AG04450 (cell line): ENCODE measurements at regions of chr6 and their contacts with region 1.

Region 1: DNA sequence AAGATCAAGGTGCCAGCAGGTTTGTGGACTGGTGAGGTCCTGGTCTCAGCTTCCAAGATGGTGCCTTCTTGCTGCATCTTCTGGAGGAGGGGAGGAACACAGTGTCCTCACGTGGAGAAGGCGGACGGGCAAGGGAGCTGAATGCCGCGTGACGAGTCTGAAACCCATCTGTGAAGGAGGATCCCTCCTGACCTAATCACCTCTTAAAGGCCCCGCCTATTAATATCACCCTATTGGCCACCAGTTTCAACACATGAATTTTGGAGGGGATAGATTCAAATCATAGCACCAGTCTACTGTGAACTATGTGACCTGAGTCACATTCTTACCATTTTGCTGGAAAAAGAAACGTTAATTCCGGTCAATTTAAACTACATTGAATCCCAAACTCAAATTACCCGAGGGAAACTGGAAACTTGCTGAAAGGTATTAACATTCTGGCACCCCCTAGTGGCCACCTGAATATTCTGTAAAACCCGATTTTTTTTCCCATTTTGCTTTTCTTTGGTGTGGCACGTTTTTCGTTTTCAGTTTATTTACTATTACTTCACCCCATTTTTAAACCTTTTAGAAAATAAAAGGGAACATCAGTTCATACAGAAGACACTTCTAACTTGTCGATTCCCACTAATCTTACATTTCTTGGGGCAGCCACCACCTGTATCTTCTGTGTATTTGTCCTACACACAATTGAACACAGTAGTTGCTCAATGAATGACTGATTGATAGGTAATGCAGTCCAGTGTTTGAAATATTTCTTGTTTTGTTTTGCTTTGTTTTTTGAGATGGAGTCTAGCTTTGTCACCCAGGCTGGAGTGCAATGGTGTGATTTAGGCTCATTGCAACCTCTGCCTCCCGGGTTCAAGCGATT is 17.9 kb upstream of the CCDC170 start:
- DNase-seq: no peak
- H3K4me3 ChIP-seq: no peak overlapping the region
- H3K27ac ChIP-seq: no peak overlapping the region
- H3K27me3 ChIP-seq: no peaks in the 10 kb centered on the region
- CTCF ChIP-seq: peak; percentile 74

Region 2: DNA sequence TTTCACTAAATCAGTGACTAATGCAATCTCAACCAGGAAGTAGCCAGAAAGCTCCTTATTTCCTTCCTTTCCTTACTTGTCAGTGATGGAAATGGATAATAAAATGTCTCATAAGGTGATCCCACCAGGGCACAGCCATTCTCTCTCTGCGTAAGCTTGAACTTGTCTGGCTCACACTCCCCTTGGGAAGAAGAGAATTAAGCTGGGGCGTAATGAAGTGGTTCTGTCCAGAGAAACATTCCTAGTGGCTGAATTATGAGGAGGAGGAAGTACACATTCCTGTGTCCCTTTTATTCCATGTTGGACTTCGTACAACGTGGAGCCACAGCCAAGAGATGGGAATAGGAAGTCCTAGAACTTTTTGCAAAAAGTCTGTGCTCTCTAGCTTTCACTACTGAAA is 516.7 kb before region 1 on chr6:
- CTCF ChIA-PET with region 1: no interaction called
- POLR2A ChIA-PET with region 1: no interaction called
- DNase-seq: no peak
- H3K4me3 ChIP-seq: no peak overlapping the region
- H3K27ac ChIP-seq: peak overlapping the region; percentile 4
- H3K27me3 ChIP-seq: no peaks in the 10 kb centered on the region
- CTCF ChIP-seq: no peak

Region 3: DNA sequence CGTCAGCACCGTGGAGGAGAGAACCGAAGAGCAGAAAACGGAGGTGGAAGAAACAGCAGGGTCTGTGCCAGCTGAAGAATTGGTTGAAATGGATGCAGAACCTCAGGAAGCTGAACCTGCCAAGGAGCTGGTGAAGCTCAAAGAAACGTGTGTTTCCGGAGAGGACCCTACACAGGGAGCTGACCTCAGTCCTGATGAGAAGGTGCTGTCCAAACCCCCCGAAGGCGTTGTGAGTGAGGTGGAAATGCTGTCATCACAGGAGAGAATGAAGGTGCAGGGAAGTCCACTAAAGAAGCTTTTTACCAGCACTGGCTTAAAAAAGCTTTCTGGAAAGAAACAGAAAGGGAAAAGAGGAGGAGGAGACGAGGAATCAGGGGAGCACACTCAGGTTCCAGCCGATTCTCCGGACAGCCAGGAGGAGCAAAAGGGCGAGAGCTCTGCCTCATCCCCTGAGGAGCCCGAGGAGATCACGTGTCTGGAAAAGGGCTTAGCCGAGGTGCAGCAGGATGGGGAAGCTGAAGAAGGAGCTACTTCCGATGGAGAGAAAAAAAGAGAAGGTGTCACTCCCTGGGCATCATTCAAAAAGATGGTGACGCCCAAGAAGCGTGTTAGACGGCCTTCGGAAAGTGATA is 126.1 kb before region 1 on chr6:
- CTCF ChIA-PET with region 1: no interaction called
- POLR2A ChIA-PET with region 1: no interaction called
- DNase-seq: no peak
- H3K4me3 ChIP-seq: no peak overlapping the region
- H3K27ac ChIP-seq: no peak overlapping the region
- H3K27me3 ChIP-seq: no peaks in the 10 kb centered on the region
- CTCF ChIP-seq: no peak

Region 4: DNA sequence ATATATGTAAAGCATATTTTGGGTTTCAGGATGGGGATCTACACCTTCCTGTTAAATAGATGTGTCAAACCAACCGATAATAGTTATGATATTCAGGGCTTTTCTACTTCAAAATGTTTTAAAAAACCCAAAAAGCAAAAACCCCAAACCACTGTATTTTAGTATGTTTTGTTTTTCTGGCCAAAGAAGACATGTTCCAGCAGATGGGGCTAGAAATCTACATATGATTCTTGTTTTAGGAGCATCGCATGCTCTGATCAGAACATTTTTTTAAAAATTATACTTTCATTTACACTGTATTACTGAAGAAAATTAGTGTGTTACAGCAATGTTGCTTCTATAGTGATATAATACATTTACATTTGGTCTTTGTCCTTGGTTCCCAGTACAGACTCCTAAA is 35.0 kb before region 1 on chr6:
- CTCF ChIA-PET with region 1: interaction called, 13 read pairs
- POLR2A ChIA-PET with region 1: no interaction called
- DNase-seq: no peak
- H3K4me3 ChIP-seq: no peak overlapping the region
- H3K27ac ChIP-seq: no peak overlapping the region
- H3K27me3 ChIP-seq: no peaks in the 10 kb centered on the region
- CTCF ChIP-seq: peak; percentile 53

Region 5: GRCh38 chr6:151461673-151462072 is 14.2 kb before region 1 on chr6:
- CTCF ChIA-PET with region 1: interaction called, 14 read pairs
- POLR2A ChIA-PET with region 1: no interaction called
- DNase-seq: no peak
- H3K4me3 ChIP-seq: no peak overlapping the region
- H3K27ac ChIP-seq: no peak overlapping the region
- H3K27me3 ChIP-seq: no peaks in the 10 kb centered on the region
- CTCF ChIP-seq: no peak

Region 6: GRCh38 chr6:151647976-151648639 is 172.2 kb after region 1 on chr6:
- CTCF ChIA-PET with region 1: interaction called, 11 read pairs
- POLR2A ChIA-PET with region 1: no interaction called
- DNase-seq: no peak
- H3K4me3 ChIP-seq: no peak overlapping the region
- H3K27ac ChIP-seq: no peak overlapping the region
- H3K27me3 ChIP-seq: no peaks in the 10 kb centered on the region
- CTCF ChIP-seq: peak; percentile 10; the same call in 1 of the 2 replicates